ENCODE measurements at regions of chr4 and their contacts with region 1.

Region 1: DNA sequence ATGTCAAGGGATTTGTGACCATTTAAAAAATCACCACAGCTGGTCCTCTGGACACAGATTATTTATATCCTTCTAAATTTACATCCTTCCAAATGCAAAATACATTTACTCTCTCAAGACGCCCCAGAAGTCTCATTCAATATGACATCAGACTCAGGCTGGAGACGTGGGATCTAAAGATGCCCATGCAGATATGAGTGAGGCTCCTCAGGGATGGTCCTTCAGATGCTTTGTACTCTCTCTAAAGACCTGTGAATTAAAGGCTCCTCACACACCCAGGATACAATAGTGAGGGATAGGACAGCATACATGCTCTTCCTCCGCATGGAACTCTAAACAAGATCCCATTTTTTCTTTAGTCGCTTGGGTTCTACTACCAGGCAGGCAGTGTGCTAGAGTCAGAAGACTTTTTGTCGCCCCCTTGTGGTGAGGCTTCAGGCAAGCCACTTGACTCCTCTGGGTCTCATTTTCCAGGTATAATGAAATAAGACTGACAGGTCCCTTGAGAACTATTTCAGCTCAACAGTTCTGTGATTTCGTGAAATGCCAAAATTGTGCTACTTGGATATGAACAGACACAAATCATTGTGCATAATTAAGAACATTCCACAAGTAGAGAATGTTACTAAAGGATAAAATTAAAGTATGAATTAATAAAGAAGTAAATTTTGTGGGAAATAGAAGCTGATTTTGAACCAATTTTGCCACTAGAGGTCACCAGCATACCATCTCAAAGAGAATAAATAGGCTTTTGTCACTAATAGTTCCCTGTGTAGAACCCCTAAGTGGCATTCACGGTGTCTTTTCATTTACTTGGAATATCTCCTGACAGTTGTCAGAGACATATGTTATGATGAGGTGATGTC is 13.7 kb upstream of the SCOC start:
- DNase-seq: peak; percentile 89
- ATAC-seq: peak; percentile 94
- H3K4me3 Mint-ChIP-seq: no peak overlapping the region
- H3K27ac Mint-ChIP-seq: no peak overlapping the region
- H3K4me1 Mint-ChIP-seq: no peaks in the 10 kb centered on the region
- H3K27me3 Mint-ChIP-seq: peaks cover 8% of the 10 kb centered on the region
- CTCF ChIP-seq: peak; percentile 82

Region 2: DNA sequence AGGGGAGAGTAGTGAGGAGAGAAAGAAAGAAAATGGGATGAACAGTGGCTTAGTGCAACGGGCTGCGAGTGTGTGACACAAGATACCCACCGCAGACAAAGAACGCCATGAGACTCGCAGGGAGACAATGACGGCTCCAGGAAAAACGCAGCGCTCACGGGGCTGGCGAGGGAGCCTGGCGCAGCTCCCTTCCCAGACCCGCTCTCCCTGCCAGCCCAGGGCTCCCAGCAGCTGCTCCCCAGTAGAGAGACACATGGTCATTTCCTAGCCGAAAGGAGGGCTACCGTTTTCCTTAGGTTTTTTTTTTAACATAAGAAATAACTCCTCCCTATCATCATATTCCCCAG is 355.3 kb before region 1 on chr4:
- CTCF ChIA-PET with region 1: interaction called, 13 read pairs
- POLR2A ChIA-PET with region 1: no interaction called
- DNase-seq: peak; percentile 55
- ATAC-seq: peak; percentile 93
- H3K4me3 Mint-ChIP-seq: peak overlapping the region; percentile 58
- H3K27ac Mint-ChIP-seq: peak overlapping the region; percentile 73; the same call in 1 of the 2 replicates
- H3K4me1 Mint-ChIP-seq: peaks cover 41% of the 10 kb centered on the region
- H3K27me3 Mint-ChIP-seq: no peaks in the 10 kb centered on the region; the same call in 1 of the 2 replicates
- CTCF ChIP-seq: no peak

Region 3: DNA sequence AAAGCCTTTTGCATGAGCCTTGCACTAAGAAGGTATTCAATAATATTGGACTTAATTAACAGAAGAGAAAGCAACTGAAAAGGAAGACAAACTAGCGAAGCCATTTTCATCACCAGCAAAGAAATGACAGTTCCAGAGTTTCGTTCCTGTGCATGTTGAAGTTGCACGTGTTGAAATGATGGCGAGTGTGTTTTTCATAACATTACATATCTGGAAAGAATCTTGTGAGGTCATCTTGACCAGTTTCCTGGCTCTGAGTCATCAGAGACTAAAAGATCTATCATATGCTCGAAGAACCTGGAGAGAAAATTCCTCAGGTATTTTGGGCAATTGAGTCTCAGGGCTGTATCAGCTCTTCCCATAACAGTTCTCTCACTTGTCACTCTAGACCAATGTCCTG is 99.6 kb before region 1 on chr4:
- CTCF ChIA-PET with region 1: no interaction called
- POLR2A ChIA-PET with region 1: no interaction called
- DNase-seq: no peak
- ATAC-seq: no peak
- H3K4me3 Mint-ChIP-seq: no peak overlapping the region
- H3K27ac Mint-ChIP-seq: no peak overlapping the region
- H3K4me1 Mint-ChIP-seq: peaks cover 21% of the 10 kb centered on the region
- H3K27me3 Mint-ChIP-seq: peaks cover 18% of the 10 kb centered on the region
- CTCF ChIP-seq: no peak

Region 4: GRCh38 chr4:140286456-140286855 is 73.3 kb before region 1 on chr4:
- CTCF ChIA-PET with region 1: no interaction called
- POLR2A ChIA-PET with region 1: no interaction called
- DNase-seq: no peak
- ATAC-seq: no peak
- H3K4me3 Mint-ChIP-seq: no peak overlapping the region
- H3K27ac Mint-ChIP-seq: no peak overlapping the region
- H3K4me1 Mint-ChIP-seq: peaks cover 2% of the 10 kb centered on the region; the same call in 1 of the 2 replicates
- H3K27me3 Mint-ChIP-seq: no peaks in the 10 kb centered on the region
- CTCF ChIP-seq: no peak

Region 5: GRCh38 chr4:140326395-140326993 is 33.3 kb before region 1 on chr4:
- CTCF ChIA-PET with region 1: interaction called, 47 read pairs
- POLR2A ChIA-PET with region 1: no interaction called
- DNase-seq: no peak
- ATAC-seq: peak; percentile 87
- H3K4me3 Mint-ChIP-seq: no peak overlapping the region
- H3K27ac Mint-ChIP-seq: no peak overlapping the region
- H3K4me1 Mint-ChIP-seq: no peaks in the 10 kb centered on the region
- H3K27me3 Mint-ChIP-seq: peaks cover 19% of the 10 kb centered on the region
- CTCF ChIP-seq: no peak; the same call in 1 of the 2 replicates

Region 6: GRCh38 chr4:140373328-140374129 is 13.7 kb after region 1 on chr4 and contains the start of gene SCOC:
- CTCF ChIA-PET with region 1: interaction called, 84 read pairs
- POLR2A ChIA-PET with region 1: interaction called, 3 read pairs
- DNase-seq: peak; percentile 99
- ATAC-seq: peak; percentile 95
- H3K4me3 Mint-ChIP-seq: no peak within 1 kb of the TSS
- H3K27ac Mint-ChIP-seq: peak within 1 kb of the TSS; percentile 91
- H3K4me1 Mint-ChIP-seq: peaks cover 22% of the 10 kb centered on the region
- H3K27me3 Mint-ChIP-seq: no peaks in the 10 kb centered on the region
- CTCF ChIP-seq: no peak
- total RNA-seq, gene SCOC: 33.0 to 37.3 TPM (median 33.6 TPM) in 3 replicates

Region 7: GRCh38 chr4:140427106-140427961 is 67.5 kb after region 1 on chr4 and contains the start of gene CLGN:
- CTCF ChIA-PET with region 1: interaction called, 30 read pairs
- POLR2A ChIA-PET with region 1: no interaction called
- DNase-seq: peak; percentile 91
- ATAC-seq: peak; percentile 95
- H3K4me3 Mint-ChIP-seq: peak within 1 kb of the TSS; percentile 82
- H3K27ac Mint-ChIP-seq: no peak within 1 kb of the TSS
- H3K4me1 Mint-ChIP-seq: peaks cover 11% of the 10 kb centered on the region
- H3K27me3 Mint-ChIP-seq: peaks cover 25% of the 10 kb centered on the region
- CTCF ChIP-seq: 0 out of 2 replicates have a peak, but pooled peaks have one; percentile 26
- total RNA-seq, gene CLGN: 2.3 to 3.4 TPM (median 3.0 TPM) in 3 replicates